Activated CD4-positive, alpha-beta memory T cell treated with anti-CD3 and anti-CD28 coated beads, Interleukin-2, amount 10 ng/mL, durations not matched to agents 7 days and 5 days (primary cell): ENCODE measurements at regions of chr12 and their contacts with region 1.

Region 1: GRCh38 chr12:48197971-48198671 is 5.0 kb downstream of the OR10AD1 start:
- DNase-seq: peak; percentile 95
- H3K4me3 Mint-ChIP-seq: peak overlapping the region; percentile 80
- H3K27ac Mint-ChIP-seq: peak overlapping the region; percentile 96
- H3K4me1 Mint-ChIP-seq: peaks cover 35% of the 10 kb centered on the region
- H3K27me3 Mint-ChIP-seq: peaks cover 15% of the 10 kb centered on the region

Region 2: GRCh38 chr12:47705566-47706425 is 492.3 kb before region 1 on chr12 and contains the start of gene RPAP3:
- CTCF ChIA-PET with region 1: no interaction called
- POLR2A ChIA-PET with region 1: interaction called, 11 read pairs
- DNase-seq: peak; percentile 98
- H3K4me3 Mint-ChIP-seq: peak within 1 kb of the TSS; percentile 95
- H3K27ac Mint-ChIP-seq: peak within 1 kb of the TSS; percentile 99
- H3K4me1 Mint-ChIP-seq: peaks cover 58% of the 10 kb centered on the region
- H3K27me3 Mint-ChIP-seq: no peaks in the 10 kb centered on the region
- total RNA-seq, gene RPAP3: 38.4 to 40.7 TPM

Region 3: GRCh38 chr12:48183091-48183875 is 14.8 kb before region 1 on chr12 and contains the start of gene CCDC184:
- CTCF ChIA-PET with region 1: interaction called, 94 read pairs
- POLR2A ChIA-PET with region 1: interaction called, 30 read pairs
- DNase-seq: peak; percentile 80
- H3K4me3 Mint-ChIP-seq: peak within 1 kb of the TSS; percentile 86
- H3K27ac Mint-ChIP-seq: peak within 1 kb of the TSS; percentile 30
- H3K4me1 Mint-ChIP-seq: peaks cover 28% of the 10 kb centered on the region
- H3K27me3 Mint-ChIP-seq: peaks cover 62% of the 10 kb centered on the region
- total RNA-seq, gene CCDC184: 0.63 to 0.65 TPM

Region 4: DNA sequence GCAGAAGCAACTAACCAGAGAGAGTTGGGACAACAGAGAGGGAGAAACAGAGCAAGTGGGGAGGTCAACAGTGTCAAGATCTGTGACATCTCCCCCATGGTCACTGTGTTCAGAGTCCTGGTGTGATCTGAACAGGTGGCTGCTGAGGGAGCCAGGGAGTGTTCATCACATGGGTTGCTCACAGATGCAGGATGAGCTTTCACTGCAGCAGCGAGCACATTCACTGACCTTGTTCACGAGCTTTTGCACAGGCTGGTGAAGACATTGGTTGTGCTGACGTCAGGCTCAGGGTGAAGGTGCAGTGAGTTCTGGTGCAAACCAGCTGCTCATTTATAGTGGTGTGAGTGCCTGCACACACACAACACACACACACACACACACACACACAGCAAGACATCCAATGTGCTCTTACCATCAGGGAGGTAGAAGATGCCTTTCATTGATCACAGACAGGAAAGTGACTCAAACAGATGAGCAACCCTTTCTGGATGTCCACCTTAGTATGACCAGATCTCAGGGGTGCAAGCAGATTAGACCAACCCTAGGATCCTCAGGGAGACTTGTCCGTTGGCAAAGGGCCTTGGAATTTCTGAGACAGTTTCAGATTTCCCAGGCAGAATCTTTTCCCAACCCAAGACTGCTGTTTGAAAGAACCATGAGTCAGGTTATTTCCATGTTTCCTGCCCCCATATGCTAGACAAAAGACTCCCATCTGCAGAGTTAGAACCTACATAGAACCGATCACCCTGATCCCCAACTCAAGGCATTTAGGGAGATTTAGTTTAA is 49.3 kb after region 1 on chr12:
- CTCF ChIA-PET with region 1: no interaction called
- POLR2A ChIA-PET with region 1: no interaction called
- DNase-seq: no peak
- H3K4me3 Mint-ChIP-seq: no peak overlapping the region
- H3K27ac Mint-ChIP-seq: no peak overlapping the region
- H3K4me1 Mint-ChIP-seq: no peaks in the 10 kb centered on the region
- H3K27me3 Mint-ChIP-seq: peaks cover 17% of the 10 kb centered on the region

Region 5: DNA sequence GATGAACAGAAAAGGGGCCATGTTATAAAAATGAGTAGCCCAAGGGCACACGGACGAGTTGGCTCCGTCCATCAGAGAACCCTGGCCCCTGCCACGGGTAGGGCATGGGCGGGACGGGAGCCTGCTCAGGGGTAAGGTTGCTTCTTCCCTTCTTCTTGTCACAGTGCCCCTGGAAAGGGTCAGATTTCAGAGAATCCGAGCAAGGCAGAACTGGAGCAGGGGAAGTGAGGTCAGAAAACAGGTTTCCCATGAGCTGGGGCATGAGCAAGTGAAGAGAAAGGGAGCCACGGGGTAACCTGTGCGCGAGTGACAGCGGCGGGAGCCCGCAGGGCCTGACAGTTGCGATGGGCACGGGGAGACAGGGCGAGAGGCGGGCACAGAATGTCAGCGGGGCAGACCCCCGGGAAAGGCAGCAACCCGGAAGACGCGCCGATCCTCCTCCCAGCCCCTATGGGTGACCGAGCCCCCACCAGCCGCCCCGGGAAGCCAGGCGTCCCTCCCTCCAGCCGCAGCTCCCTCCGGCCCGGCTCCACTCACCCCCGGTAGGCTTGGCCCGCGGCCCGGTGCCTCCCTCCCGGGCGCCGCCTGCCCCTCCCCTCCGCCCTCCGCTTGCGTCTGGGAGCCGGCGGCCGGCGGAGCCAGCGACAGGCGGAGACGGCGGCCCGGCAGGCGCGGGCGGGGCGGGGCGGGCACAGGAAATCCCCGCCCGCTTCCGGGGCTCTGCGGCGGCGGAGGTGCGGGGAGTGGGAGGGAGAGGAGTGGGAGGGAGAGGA is 152.3 kb after region 1 on chr12 and contains the start of gene ZNF641:
- CTCF ChIA-PET with region 1: interaction called, 8 read pairs
- POLR2A ChIA-PET with region 1: interaction called, 10 read pairs
- DNase-seq: peak; percentile 87
- H3K4me3 Mint-ChIP-seq: peak within 1 kb of the TSS; percentile 85
- H3K27ac Mint-ChIP-seq: peak within 1 kb of the TSS; percentile 74
- H3K4me1 Mint-ChIP-seq: peaks cover 26% of the 10 kb centered on the region
- H3K27me3 Mint-ChIP-seq: peaks cover 3% of the 10 kb centered on the region
- total RNA-seq, gene ZNF641: 16.4 to 16.9 TPM

Region 6: DNA sequence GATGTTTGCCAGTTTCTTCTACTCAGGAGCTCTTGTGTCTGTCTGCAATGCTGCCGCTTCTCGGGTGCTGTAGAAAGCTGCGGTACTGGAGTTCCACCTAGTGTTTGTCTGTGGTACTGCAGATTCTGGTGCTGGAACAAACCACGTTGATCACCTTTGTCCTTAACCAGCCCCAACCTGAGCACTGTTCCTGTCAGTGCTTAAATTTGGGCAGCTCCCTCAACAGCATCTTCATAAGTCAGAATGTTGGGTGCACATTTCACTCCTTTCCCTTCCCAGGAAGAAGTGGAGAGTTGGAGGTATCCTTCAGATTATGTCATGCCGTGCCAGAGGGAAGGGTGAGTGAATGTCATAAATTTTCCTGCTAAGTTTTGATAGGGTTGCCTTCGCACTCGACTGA is 420.4 kb after region 1 on chr12:
- CTCF ChIA-PET with region 1: interaction called, 16 read pairs
- POLR2A ChIA-PET with region 1: no interaction called
- DNase-seq: peak; percentile 78
- H3K4me3 Mint-ChIP-seq: no peak overlapping the region
- H3K27ac Mint-ChIP-seq: no peak overlapping the region
- H3K4me1 Mint-ChIP-seq: no peaks in the 10 kb centered on the region
- H3K27me3 Mint-ChIP-seq: peaks cover 35% of the 10 kb centered on the region